Endothelial cell of umbilical vein (primary cell): ENCODE measurements at regions of chr6 and their contacts with region 1.

Region 1: DNA sequence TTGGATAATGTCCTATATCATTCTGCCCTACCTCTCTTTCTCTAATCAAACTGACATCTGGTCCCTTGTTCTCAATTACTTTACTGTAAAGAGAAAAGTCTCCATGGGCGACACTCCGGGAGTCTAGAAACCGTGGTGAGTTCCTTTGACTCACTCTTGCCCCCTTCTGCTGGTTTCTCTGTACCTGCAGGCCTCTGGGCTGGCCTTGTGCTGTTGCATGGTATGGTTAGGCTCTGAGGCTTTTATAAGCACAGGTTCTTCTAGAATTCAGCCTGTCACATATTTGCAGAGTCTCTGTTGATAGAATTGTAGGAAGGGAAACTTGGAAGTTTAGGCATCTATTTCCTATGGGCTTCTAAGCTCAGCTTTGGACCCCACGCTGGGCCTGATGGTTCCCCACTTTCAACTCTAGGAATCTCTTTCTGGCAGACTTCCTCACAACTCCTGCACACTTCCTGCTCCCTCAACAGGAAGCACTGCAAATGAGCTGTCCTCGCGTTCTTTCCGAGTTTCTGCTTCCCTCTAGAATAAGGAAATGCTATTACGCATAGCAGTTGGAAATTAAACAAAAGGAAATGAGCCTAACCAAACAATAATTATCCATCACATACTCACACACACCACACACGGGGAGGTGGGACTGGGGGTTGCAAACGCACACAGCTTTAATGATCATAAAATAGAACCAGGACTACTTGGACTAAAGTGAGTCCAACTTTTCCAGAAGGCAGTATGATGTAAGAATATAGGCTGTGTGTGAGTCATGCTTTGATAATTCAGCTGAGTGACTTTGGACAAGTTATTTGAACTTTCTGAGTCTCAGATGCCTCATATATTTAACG is 683.3 kb downstream of the QKI start:
- DNase-seq: peak; percentile 94
- H3K4me3 ChIP-seq: no peak overlapping the region
- H3K27ac ChIP-seq: peak overlapping the region; percentile 59
- H3K4me1 ChIP-seq: peaks cover 23% of the 10 kb centered on the region
- H3K27me3 ChIP-seq: no peaks in the 10 kb centered on the region
- CTCF ChIP-seq: peak; percentile 22 to 51
- POLR2A ChIP-seq: no peak

Region 2: DNA sequence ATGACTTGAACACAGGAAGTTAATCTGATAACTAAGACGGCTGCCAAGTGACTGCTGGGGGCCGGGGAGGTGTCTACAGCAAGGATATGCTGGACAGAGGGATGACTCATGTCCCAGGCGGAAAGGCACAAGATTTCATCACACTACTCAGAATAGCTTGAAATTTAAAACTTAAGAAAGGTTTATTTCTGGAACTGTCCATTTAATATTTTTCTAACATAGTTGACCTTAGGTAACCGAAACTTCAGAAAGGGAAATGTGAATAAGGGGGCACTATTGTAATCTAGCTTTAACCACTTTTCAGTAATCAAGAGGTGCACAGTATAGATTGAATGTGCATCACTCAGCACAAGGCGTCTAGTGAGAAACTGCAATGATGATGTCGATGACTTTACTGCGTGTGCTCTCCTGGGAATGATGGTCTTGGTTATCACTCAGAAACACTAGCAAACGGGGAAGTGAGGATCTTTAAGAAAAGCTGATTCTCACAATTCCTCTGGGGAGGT is 511.8 kb before region 1 on chr6:
- CTCF ChIA-PET with region 1: no interaction called
- POLR2A ChIA-PET with region 1: no interaction called
- dilution Hi-C with region 1: no loop called
- intact Hi-C with region 1: loop called (anchors 2 kb)
- DNase-seq: peak; percentile 76
- H3K4me3 ChIP-seq: no peak overlapping the region
- H3K27ac ChIP-seq: peak overlapping the region; percentile 21
- H3K4me1 ChIP-seq: peaks cover 20% of the 10 kb centered on the region
- H3K27me3 ChIP-seq: no peaks in the 10 kb centered on the region
- CTCF ChIP-seq: no peak
- POLR2A ChIP-seq: no peak

Region 3: DNA sequence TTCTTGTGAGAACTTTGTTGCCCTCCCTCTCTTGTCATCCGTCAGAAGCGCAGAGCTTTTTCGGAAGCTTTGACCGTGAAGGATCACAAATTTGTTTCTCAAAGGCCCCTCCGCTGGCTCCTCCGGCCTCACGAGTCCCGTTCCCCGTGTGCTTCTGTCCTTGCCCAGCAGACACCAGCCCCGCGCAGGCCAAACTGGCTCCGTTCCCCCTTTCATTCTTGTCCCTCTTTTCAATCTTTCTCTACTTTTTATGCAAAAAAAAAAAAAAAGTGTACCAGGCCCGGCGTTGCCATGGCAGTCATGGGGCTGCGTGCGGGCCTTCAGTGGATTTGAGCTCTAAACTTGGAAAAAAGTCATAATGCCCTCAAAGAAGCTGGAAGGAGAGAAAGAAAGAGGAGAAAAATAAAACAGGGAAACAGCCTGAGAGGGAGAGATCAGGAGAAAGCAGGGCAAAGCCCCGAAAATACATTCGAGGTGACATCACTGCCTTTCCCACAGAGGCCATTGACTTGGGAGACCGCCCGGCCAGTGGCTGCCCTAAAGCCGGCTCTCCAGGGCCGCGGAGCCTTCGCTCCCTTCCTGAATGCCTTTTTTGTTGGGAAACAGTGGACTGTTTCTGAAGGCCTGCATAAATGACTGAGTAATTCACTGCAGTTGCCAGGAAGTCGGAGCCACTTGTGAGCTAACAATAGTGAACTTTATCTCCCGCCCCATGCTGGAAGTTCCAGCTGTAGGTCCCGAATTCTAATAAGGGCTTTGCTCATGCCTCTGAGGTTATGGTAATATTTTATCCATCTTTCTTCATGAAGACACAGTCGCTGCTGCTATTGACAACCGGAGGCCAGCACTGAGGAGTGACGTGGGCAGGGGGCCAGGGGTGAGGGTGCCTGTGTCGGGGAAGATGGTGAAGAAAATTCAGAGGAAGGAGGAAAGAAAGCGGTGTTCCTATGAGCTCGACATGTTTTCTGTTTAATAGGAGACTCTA is 12.4 kb before region 1 on chr6:
- CTCF ChIA-PET with region 1: interaction called, 13 read pairs
- POLR2A ChIA-PET with region 1: interaction called, 3 read pairs
- dilution Hi-C with region 1: no loop called
- intact Hi-C with region 1: loop called (anchors 1 kb)
- DNase-seq: peak; percentile 81
- H3K4me3 ChIP-seq: no peak overlapping the region
- H3K27ac ChIP-seq: peak overlapping the region; percentile 66
- H3K4me1 ChIP-seq: peaks cover 20% of the 10 kb centered on the region
- H3K27me3 ChIP-seq: no peaks in the 10 kb centered on the region
- CTCF ChIP-seq: no peak
- POLR2A ChIP-seq: no peak

Region 4: DNA sequence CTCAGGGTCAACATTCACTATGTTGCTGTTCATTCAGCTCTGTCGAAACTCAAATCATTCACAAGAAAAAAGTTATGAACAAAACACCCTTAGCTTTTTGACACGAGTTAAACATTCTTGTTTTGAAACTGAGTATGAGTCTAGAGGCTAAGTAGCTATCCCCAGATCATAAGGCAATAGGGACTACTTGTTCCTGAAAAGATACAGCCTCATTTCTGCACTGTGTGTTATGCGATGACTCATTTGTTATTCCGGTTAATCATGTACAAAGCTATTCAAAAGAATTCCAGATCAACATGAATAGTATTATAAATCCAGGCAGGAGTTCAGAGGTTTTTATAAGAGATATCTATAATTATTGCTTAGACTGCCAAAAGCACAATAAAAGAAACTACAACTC is 224.8 kb after region 1 on chr6:
- CTCF ChIA-PET with region 1: no interaction called
- POLR2A ChIA-PET with region 1: no interaction called
- dilution Hi-C with region 1: no loop called
- intact Hi-C with region 1: loop called (anchors 5 kb)
- DNase-seq: peak; percentile 89
- H3K4me3 ChIP-seq: no peak overlapping the region
- H3K27ac ChIP-seq: peak overlapping the region; percentile 62
- H3K4me1 ChIP-seq: peaks cover 22% of the 10 kb centered on the region
- H3K27me3 ChIP-seq: no peaks in the 10 kb centered on the region
- CTCF ChIP-seq: no peak
- POLR2A ChIP-seq: no peak

Region 5: DNA sequence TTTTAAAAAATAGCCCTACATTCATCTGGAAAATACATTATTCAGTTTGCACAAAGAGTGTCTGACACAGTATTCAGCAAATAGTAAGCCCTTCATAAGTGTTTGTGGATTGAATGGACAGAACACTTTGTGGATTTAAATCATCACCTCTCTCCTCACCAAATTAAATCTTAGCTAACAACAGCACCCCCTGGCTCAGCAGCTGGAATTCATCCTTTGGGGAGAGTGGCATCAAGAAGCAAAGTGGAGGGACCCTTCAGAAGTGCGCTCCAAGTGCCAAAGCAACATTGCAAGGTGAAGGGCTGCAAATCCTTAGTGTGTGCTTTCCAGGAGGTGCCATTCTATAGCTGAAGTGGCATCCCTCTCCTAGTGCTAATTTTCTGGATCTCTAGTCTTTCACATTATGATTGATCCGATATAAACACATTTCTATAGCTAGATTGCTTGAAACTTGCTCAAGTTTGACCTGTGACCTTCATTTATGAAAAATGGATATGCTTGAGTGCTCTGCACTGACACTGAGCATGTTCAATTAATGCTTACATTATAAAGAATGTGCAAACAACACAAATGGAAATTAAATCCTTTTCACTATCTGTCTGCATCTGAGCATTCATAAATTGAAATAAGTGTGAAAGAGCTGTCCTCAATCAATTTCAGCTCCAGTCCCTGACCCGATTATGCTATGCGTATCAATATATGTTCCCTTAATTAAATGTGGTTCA is 319.9 kb after region 1 on chr6:
- CTCF ChIA-PET with region 1: no interaction called
- POLR2A ChIA-PET with region 1: no interaction called
- dilution Hi-C with region 1: no loop called
- intact Hi-C with region 1: loop called (anchors 5 kb)
- DNase-seq: no peak
- H3K4me3 ChIP-seq: no peak overlapping the region
- H3K27ac ChIP-seq: no peak overlapping the region
- H3K4me1 ChIP-seq: peaks cover 45% of the 10 kb centered on the region
- H3K27me3 ChIP-seq: no peaks in the 10 kb centered on the region
- CTCF ChIP-seq: no peak
- POLR2A ChIP-seq: no peak

Region 6: DNA sequence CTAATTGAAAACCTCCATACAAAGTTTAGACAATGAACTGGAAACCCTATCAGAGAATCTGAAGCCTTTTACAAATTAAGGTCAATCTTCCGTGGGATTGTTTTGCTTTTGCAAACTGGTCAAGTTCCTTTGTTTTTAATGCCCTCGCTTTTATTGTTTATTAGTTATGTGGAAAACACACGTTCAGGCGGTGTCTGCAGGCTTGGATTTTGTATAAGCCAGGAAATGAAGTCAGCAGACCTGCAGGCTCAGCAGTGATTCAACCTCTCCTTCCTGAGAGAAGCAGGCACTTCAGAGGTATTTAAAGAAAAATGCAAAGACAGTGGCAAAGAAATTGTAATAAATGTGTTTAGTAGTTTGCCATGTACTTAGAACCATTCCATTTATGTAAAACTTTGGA is 1668.7 kb after region 1 on chr6:
- CTCF ChIA-PET with region 1: no interaction called
- POLR2A ChIA-PET with region 1: no interaction called
- dilution Hi-C with region 1: no loop called
- intact Hi-C with region 1: loop called (anchors 2 kb)
- DNase-seq: peak; percentile 97
- H3K4me3 ChIP-seq: peak overlapping the region in 1 of 3 experiments; percentile 11
- H3K27ac ChIP-seq: peak overlapping the region; percentile 98
- H3K4me1 ChIP-seq: peaks cover 44% of the 10 kb centered on the region
- H3K27me3 ChIP-seq: no peaks in the 10 kb centered on the region
- CTCF ChIP-seq: no peak
- POLR2A ChIP-seq: no peak